Caco-2 (cell line): ENCODE measurements at regions of chr1 and their contacts with region 1.

Region 1: GRCh38 chr1:16366722-16367257 is at the start of gene SZRD1:
- DNase-seq: peak; percentile 93 to 96
- H3K4me3 ChIP-seq: peak within 1 kb of the TSS; percentile 78
- H3K4me3 Mint-ChIP-seq: peak within 1 kb of the TSS; percentile 86
- H3K27ac Mint-ChIP-seq: peak within 1 kb of the TSS; percentile 93
- H3K4me1 ChIP-seq: peaks cover 12% of the 10 kb centered on the region
- H3K4me1 Mint-ChIP-seq: peaks cover 8% of the 10 kb centered on the region
- H3K27me3 ChIP-seq: no peaks in the 10 kb centered on the region
- H3K27me3 Mint-ChIP-seq: no peaks in the 10 kb centered on the region
- CTCF ChIP-seq: no peak
- total RNA-seq, gene SZRD1: 93.8 and 98.7 TPM in 2 replicates

Region 2: DNA sequence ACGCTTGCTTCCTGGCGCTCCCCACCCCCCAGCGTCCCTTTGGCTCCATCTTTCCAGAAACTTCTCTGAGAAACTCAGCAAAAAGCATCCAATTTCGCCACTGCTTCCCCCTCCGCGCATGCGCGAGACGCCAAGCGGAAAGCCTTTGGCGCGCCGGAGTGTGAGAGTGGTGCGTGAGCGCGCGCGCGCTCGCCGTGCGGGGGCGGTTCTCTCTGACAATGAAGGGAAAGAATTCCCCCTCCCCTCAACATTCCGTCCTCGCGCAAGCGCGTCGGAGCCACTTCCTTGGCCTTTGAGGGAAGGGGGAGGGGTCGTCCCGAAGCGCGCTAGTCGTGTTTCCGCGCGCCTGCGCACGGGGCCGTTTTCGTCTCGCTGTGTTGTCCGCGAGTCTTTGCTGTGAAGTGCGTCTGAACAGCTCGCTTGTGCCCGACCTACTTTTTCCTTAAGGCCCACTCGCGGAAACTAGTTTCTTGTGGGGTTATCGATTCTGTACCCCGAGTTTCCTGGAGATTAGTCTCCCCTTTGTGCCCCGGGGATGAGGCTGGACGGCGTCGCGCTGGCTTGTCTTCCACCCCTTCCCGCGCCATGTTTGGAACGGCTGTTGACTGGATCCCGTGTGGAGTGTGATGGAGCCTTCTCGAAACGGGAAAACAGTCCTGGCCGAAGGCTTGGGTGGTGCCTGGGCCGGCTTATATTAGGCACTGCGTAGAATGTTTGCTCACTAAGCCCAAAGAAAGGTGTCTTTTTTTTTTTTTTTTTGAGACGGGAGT is 530.9 kb before region 1 on chr1:
- CTCF ChIA-PET with region 1: no interaction called
- POLR2A ChIA-PET with region 1: no interaction called
- intact Hi-C with region 1: no loop called
- DNase-seq: peak; percentile 96 to 98
- H3K4me3 ChIP-seq: peak overlapping the region; percentile 64
- H3K4me3 Mint-ChIP-seq: peak overlapping the region; percentile 88
- H3K27ac Mint-ChIP-seq: peak overlapping the region; percentile 96
- H3K4me1 ChIP-seq: no peaks in the 10 kb centered on the region
- H3K4me1 Mint-ChIP-seq: no peaks in the 10 kb centered on the region
- H3K27me3 ChIP-seq: no peaks in the 10 kb centered on the region
- H3K27me3 Mint-ChIP-seq: no peaks in the 10 kb centered on the region
- CTCF ChIP-seq: no peak

Region 3: GRCh38 chr1:16165548-16165947 is 201.2 kb before region 1 on chr1:
- CTCF ChIA-PET with region 1: no interaction called
- POLR2A ChIA-PET with region 1: no interaction called
- intact Hi-C with region 1: no loop called
- DNase-seq: no peak
- H3K4me3 ChIP-seq: no peak overlapping the region
- H3K4me3 Mint-ChIP-seq: no peak overlapping the region
- H3K27ac Mint-ChIP-seq: peak overlapping the region; percentile 63
- H3K4me1 ChIP-seq: peaks cover 12% of the 10 kb centered on the region; the same call in 1 of the 2 replicates
- H3K4me1 Mint-ChIP-seq: peaks cover 26% of the 10 kb centered on the region
- H3K27me3 ChIP-seq: no peaks in the 10 kb centered on the region
- H3K27me3 Mint-ChIP-seq: no peaks in the 10 kb centered on the region
- CTCF ChIP-seq: no peak

Region 4: DNA sequence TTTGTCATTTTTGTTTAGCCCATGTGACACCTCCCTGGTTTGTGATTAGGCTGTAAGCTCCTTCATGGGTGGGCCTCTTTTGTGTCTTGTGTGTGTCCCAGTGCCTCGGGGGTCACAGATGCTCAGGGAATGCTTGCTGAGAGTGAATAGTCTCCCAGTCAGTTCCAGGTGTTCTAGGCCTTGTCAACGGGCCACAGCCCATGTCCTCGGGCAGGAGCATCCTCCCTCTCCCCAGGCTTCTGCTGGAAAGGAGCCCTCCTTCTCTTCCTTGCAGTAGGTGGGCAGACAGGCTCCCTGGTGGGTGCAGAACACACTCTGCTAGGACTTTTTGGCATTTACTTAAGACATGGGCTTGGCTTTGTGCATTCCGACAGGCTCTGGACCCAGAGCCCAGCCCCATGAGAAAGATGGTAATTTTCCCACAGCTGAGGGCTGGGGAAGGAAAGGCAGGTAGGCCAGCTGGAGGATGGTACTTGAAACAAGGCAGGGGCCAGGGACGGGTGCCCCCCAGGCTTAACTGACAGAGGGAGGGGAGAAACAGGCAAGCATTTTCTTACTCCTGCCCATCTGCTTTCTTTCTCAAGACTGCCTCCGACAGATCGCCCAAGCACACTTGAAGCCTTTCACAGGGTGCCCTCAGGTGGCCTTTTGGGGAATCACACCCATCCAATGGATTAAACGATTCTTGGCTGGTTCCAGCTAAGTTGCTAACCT is 122.7 kb before region 1 on chr1:
- CTCF ChIA-PET with region 1: interaction called, 4 read pairs
- POLR2A ChIA-PET with region 1: no interaction called
- intact Hi-C with region 1: loop called (anchors 2 kb)
- DNase-seq: peak; percentile 67 to 73
- H3K4me3 ChIP-seq: no peak overlapping the region
- H3K4me3 Mint-ChIP-seq: no peak overlapping the region
- H3K27ac Mint-ChIP-seq: no peak overlapping the region
- H3K4me1 ChIP-seq: no peaks in the 10 kb centered on the region
- H3K4me1 Mint-ChIP-seq: no peaks in the 10 kb centered on the region
- H3K27me3 ChIP-seq: no peaks in the 10 kb centered on the region
- H3K27me3 Mint-ChIP-seq: no peaks in the 10 kb centered on the region
- CTCF ChIP-seq: peak; percentile 69

Region 5: GRCh38 chr1:16254263-16254928 is 112.4 kb before region 1 on chr1:
- CTCF ChIA-PET with region 1: no interaction called
- POLR2A ChIA-PET with region 1: no interaction called
- intact Hi-C with region 1: no loop called
- DNase-seq: no peak
- H3K4me3 ChIP-seq: no peak overlapping the region
- H3K4me3 Mint-ChIP-seq: no peak overlapping the region
- H3K27ac Mint-ChIP-seq: no peak overlapping the region
- H3K4me1 ChIP-seq: no peaks in the 10 kb centered on the region
- H3K4me1 Mint-ChIP-seq: no peaks in the 10 kb centered on the region
- H3K27me3 ChIP-seq: no peaks in the 10 kb centered on the region
- H3K27me3 Mint-ChIP-seq: no peaks in the 10 kb centered on the region
- CTCF ChIP-seq: no peak

Region 6: DNA sequence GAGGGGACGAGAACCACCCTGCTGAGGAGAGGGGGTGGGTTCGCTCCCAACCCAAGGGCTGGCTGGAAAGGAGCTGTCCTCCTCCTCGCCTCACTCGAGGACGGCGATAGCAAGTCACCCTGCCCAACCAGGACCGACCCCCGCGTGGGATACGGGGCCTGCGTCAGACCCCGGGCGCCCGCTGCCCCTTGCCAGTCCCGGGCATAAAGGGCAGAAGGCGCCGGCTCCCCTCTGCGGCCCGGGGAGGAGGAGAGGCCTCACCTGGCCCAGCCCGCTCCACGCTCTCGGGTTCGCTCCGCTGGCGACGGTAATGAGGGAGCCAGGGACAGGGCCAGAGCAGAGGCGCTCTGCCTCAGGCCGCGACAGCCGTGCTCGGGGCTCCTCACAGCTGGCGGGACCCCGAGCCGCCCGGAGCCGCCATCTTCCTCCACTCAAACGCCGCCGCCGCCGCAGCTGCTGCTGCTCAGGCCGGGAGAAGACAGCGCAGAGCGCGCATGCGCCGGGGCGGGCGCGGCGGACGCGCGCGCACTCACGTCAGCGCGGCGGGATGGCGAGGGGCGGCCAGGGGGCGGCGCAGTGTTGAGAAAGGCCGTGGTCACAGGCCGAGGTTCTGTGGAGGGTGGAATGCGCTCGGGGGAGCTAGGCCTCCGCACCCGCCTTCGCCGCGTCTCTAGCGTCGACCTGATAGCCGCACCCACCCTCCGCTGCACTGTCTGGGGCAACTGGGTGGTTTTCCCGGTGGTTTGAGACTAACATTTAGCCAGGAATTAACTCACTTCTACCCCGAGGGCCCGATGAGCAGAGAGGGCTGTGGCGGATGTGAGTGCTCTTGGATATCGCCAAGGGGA is 14.6 kb before region 1 on chr1 and contains the start of gene FBXO42:
- CTCF ChIA-PET with region 1: interaction called, 12 read pairs
- POLR2A ChIA-PET with region 1: interaction called, 4 read pairs
- intact Hi-C with region 1: loop called (anchors 2 kb)
- DNase-seq: peak; percentile 91 to 94
- H3K4me3 ChIP-seq: peak within 1 kb of the TSS; percentile 66
- H3K4me3 Mint-ChIP-seq: peak within 1 kb of the TSS; percentile 84
- H3K27ac Mint-ChIP-seq: peak within 1 kb of the TSS; percentile 76
- H3K4me1 ChIP-seq: peaks cover 14% of the 10 kb centered on the region; the same call in 1 of the 2 replicates
- H3K4me1 Mint-ChIP-seq: no peaks in the 10 kb centered on the region
- H3K27me3 ChIP-seq: no peaks in the 10 kb centered on the region
- H3K27me3 Mint-ChIP-seq: no peaks in the 10 kb centered on the region
- CTCF ChIP-seq: peak; percentile 9 to 31
- total RNA-seq, gene FBXO42: 11.3 TPM in 2 replicates